ENCODE measurements at regions of chr6 and their contacts with region 1.

Region 1: DNA sequence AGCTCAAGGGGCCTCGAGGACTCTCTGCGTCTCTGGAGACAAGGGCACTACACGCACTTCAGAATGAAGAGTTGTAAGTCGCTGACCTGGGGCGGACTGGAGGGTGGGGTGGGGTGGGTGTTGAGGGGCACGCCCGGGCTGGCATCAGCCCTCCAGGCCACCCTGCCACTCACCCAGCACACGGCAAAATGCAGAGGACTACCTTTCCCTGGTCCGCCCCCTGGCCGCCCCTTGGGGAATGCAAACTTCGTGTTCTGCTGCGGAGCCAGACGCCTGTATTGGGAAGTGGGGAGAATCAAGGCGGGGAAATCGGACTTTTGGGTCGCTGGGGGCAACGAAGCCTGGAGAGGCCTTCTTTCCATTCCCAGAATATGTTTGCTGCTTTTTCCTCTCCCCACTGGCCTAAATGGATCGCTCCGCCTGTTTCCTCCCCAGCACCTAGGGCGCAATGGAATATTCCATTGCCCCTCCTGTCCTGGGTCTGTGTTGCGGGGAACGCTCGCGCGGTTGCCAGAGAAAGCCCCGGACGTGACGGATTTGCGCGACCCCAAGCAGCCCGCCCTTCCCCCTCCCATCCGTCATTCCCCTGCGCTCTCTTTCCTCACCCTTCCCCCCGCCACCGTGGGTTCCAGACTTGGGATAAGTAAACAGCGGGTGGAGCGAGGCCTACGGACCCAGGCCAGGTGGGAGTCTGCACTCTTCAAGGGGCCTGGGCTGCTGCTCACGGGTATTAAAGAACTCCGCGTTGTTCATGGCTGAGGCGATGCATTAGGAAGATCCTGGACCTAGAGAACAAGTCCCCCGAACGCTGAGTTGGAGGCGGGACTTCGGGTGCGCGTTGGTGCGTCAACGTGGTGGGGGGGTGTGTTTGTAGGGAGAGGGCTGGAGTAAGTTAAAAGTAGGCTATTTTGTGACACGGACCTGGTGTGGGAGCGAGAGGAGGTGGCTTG is at the start of gene PPT2:
- DNase-seq: peak; percentile 83 to 94 (median 90)
- H3K4me3 ChIP-seq: peak within 1 kb of the TSS; percentile 55 to 97 (median 84)
- H3K27ac ChIP-seq: peak within 1 kb of the TSS; percentile 68 to 99 (median 96)
- H3K27me3 ChIP-seq: no peaks in the 10 kb centered on the region
- CTCF ChIP-seq: peak in 30 of 56 donors; percentile 4 to 45 (median 20)
- total RNA-seq, gene PPT2: 21.2 to 55.9 (median 31.2) TPM

Region 2: DNA sequence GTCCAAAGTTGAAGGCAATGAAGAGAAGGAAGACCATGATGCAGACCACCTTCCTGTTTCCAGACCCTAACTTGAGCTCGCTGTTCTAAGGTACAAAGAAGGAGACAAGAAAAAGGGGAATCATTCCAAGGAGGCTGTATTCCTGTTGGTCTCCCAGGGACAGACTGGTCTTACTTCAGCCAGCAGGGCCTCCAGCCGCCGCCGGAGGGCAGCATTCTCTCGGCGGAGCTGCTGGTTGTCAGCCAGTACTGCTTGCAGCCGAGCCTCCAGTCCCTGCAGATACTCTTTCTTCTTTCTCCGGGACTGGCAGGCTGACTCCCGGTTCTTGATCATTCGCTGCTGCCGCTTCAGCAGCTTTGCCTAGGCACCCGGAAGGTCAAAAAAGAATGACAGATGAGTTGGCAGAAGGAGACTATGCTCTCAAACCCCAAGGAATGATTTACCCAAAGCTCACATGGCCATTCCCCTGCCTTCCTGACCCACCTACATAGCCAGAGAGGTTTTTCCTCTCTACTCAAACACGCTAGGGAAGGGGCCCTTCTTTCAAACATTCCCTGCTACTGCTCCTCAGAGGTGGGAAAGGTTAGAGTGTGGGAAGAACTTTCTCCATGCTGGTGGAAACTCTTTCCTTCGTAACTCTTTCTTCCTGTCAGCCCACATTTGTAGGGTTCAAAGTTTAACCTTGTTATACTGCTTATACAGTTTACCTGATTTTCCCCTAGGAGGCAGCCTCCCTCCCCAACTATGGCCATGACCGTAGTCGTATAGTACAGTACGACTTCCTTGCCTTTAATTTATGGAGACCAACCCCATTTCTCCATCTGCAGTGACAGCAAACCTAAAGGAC is 34.8 kb before region 1 on chr6:
- intact Hi-C with region 1: loop called (anchors 2 to 5 kb)
- DNase-seq: peak; percentile 84 to 95 (median 92)
- H3K4me3 ChIP-seq: peak overlapping the region in 14 of 59 donors; percentile 1 to 25 (median 4)
- H3K27ac ChIP-seq: peak overlapping the region in 54 of 59 donors; percentile 6 to 88 (median 68)
- H3K27me3 ChIP-seq: no peaks in the 10 kb centered on the region
- CTCF ChIP-seq: peak; percentile 75 to 99 (median 94)

Region 3: GRCh38 chr6:32127717-32128592 is 25.9 kb before region 1 on chr6 and contains the start of gene ATF6B:
- intact Hi-C with region 1: loop called (anchors 2 kb)
- DNase-seq: peak; percentile 98 to 100 (median 99)
- H3K4me3 ChIP-seq: peak within 1 kb of the TSS; percentile 60 to 100 (median 93)
- H3K27ac ChIP-seq: peak within 1 kb of the TSS in 57 of 59 donors; percentile 13 to 97 (median 91)
- H3K27me3 ChIP-seq: no peaks in the 10 kb centered on the region
- CTCF ChIP-seq: peak in 16 of 56 donors; percentile 3 to 58 (median 20)
- total RNA-seq, gene ATF6B: 61.3 to 117 (median 80.7) TPM

Region 4: DNA sequence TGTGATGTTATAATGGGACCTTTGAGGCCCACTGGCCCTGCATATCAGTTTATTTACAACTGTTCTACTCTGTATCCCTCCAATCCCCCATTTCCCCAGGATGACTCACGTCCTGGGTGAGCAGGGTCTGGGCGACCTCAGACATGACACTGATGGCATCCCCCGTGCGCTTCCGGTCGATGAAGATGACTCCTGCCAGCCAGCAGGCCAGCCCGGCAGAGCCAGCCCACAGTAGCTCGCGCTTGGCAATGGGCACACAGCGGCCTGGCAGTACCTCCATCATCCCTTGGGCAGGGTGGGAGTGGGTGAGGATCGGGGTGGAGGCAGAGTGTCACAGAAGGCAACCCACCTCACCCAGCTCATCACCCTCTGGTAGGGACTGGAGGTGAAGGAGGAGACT is 16.5 kb after region 1 on chr6:
- intact Hi-C with region 1: loop called in 1 of 2 experiments (anchors 2 kb)
- DNase-seq: no peak
- H3K4me3 ChIP-seq: no peak overlapping the region
- H3K27ac ChIP-seq: no peak overlapping the region
- H3K27me3 ChIP-seq: no peaks in the 10 kb centered on the region
- CTCF ChIP-seq: no peak

Region 5: GRCh38 chr6:32177788-32178546 is 24.1 kb after region 1 on chr6 and contains the start of gene RNF5:
- intact Hi-C with region 1: loop called in 1 of 2 experiments (anchors 2 kb)
- DNase-seq: peak; percentile 75 to 99 (median 96)
- H3K4me3 ChIP-seq: peak within 1 kb of the TSS; percentile 49 to 98 (median 89)
- H3K27ac ChIP-seq: peak within 1 kb of the TSS; percentile 86 to 100 (median 99)
- H3K27me3 ChIP-seq: no peaks in the 10 kb centered on the region
- CTCF ChIP-seq: peak in 6 of 56 donors; percentile 2 to 23 (median 15)
- total RNA-seq, gene RNF5: 34.1 to 70.5 (median 51.5) TPM